Prostate gland (tissue), 2 donors: ENCODE measurements at regions of chr11 and their contacts with region 1.

Region 1: GRCh38 chr11:61446211-61446651 is 16.3 kb downstream of the SDHAF2 start:
- DNase-seq: peak; percentile 82
- H3K4me3 ChIP-seq: no peak overlapping the region
- H3K27ac ChIP-seq: peak overlapping the region; percentile 42 to 48
- H3K4me1 ChIP-seq: no peaks in the 10 kb centered on the region
- H3K27me3 ChIP-seq: no peaks in the 10 kb centered on the region
- CTCF ChIP-seq: peak; percentile 18 to 86 (median 76)
- POLR2A ChIP-seq: no peak

Region 2: GRCh38 chr11:61406067-61406466 is 40.2 kb before region 1 on chr11:
- intact Hi-C with region 1: no loop called
- DNase-seq: no peak
- H3K4me3 ChIP-seq: no peak overlapping the region
- H3K27ac ChIP-seq: no peak overlapping the region
- H3K4me1 ChIP-seq: peaks cover 3% of the 10 kb centered on the region
- H3K27me3 ChIP-seq: no peaks in the 10 kb centered on the region
- CTCF ChIP-seq: no peak
- POLR2A ChIP-seq: no peak

Region 3: DNA sequence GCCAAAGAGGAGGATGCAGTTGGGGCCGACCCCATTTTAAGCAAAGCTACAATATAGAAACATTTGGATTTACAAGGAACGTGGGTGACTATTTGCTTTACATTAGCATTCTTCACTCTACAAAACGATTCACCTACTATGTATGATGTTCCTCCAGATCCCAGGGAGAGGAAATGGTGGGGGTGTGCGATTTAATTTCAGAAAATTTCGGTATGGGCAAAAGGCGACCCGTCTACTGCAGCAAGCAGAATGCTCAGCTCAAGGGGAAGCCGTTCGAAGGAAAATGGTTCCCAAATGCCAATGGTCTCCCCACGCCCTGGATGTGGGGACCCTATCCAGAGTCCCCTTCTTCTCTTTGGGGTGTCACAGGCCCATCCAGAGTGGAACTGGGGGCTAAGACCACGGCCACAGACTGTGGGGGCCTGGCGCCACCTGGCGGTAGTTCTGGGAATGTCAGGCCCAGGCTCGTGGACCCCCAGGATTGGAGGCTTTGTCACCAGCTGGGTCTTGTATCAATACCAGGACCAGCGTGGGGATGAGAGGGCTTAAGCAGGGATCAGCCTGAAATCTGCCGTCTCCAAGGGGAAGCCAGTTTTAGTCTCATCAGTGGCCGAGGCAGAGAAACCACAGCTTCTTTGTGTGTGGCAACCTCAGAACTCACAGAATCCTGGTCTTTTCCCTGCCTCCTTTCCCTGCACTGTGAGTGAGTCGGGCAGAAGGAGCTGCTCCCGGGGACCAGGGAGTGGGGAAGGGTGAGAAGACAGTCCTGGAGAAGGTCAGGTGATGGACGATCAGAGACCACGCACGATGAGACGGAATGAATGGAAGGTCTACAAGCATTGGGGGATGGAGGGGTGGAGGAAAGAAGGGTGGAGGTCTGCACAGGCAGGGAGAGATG is 70.7 kb after region 1 on chr11:
- intact Hi-C with region 1: loop called (anchors 5 kb)
- DNase-seq: no peak
- H3K4me3 ChIP-seq: no peak overlapping the region
- H3K27ac ChIP-seq: no peak overlapping the region
- H3K4me1 ChIP-seq: peaks cover 6% of the 10 kb centered on the region
- H3K27me3 ChIP-seq: no peaks in the 10 kb centered on the region
- CTCF ChIP-seq: peak; percentile 88 to 95 (median 90)
- POLR2A ChIP-seq: no peak